Body of pancreas (tissue), 4 donors: ENCODE measurements at regions of chr10 and their contacts with region 1.

Region 1: GRCh38 chr10:71285180-71285545 is 33.9 kb upstream of the SLC29A3 start:
- DNase-seq: peak; percentile 40 to 62 (median 46)
- ATAC-seq: peak; percentile 67
- H3K4me3 ChIP-seq: no peak overlapping the region
- H3K27ac ChIP-seq: no peak overlapping the region
- H3K4me1 ChIP-seq: no peaks in the 10 kb centered on the region
- H3K27me3 ChIP-seq: no peaks in the 10 kb centered on the region
- CTCF ChIP-seq: peak; percentile 52 to 77 (median 67)
- POLR2A ChIP-seq: no peak

Region 2: DNA sequence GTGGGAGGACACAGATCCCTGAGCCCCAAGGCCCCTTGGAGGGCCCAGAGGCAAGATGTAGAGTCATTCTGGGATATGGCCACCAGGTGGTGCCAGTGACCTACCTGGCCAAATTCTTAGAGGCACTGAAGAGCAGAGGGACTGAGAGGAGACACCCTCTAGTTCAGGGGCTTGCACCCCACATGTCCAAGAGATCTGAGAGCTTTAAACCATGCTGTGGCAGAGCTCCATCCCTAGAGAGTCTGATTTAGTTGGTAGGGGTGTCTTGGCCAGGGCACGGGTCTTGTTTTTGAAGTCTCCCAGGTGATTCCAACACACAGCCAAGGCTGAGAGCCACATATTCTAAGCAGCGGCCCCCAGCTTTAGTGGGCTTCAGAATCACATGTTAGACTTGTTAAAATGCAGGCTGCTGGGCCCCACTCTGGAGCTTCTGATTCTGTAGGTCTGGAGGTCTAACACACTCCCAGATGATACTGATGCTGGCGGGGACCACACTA is 735.2 kb before region 1 on chr10:
- intact Hi-C with region 1: loop called (anchors 10 kb)
- DNase-seq: peak; percentile 62 to 74 (median 68)
- ATAC-seq: peak; percentile 61
- H3K4me3 ChIP-seq: no peak overlapping the region
- H3K27ac ChIP-seq: no peak overlapping the region
- H3K4me1 ChIP-seq: no peaks in the 10 kb centered on the region
- H3K27me3 ChIP-seq: no peaks in the 10 kb centered on the region
- CTCF ChIP-seq: peak; percentile 67 to 84 (median 80)
- POLR2A ChIP-seq: no peak

Region 3: DNA sequence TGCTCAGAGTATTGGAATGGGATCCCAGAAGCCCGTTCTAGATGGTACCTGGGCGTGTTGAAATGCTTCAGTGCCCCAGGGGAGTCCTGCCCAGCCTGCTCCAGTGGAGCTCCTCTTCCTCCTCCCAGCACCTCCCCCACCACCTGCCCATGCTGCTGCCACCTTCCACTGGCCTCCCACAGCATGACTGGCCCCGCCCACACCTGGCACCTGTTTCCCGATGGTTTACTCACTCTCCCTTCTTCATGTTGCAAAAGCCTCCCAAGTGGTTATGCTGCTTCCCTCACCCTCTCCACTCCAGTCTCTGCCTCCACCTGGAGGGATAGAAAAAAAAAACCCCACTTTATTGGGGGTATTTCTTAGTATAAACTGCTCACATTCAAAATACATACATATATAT is 364.6 kb before region 1 on chr10:
- intact Hi-C with region 1: loop called (anchors 5 kb)
- DNase-seq: peak; percentile 58 to 78 (median 69)
- ATAC-seq: peak; percentile 62
- H3K4me3 ChIP-seq: no peak overlapping the region
- H3K27ac ChIP-seq: no peak overlapping the region
- H3K4me1 ChIP-seq: no peaks in the 10 kb centered on the region
- H3K27me3 ChIP-seq: no peaks in the 10 kb centered on the region
- CTCF ChIP-seq: no peak
- POLR2A ChIP-seq: no peak

Region 4: GRCh38 chr10:71052076-71052660 is 233.0 kb before region 1 on chr10:
- intact Hi-C with region 1: no loop called
- DNase-seq: peak in 3 of 4 donors; percentile 8 to 36 (median 29)
- ATAC-seq: no peak
- H3K4me3 ChIP-seq: no peak overlapping the region
- H3K27ac ChIP-seq: no peak overlapping the region
- H3K4me1 ChIP-seq: no peaks in the 10 kb centered on the region
- H3K27me3 ChIP-seq: no peaks in the 10 kb centered on the region
- CTCF ChIP-seq: no peak
- POLR2A ChIP-seq: no peak

Region 5: DNA sequence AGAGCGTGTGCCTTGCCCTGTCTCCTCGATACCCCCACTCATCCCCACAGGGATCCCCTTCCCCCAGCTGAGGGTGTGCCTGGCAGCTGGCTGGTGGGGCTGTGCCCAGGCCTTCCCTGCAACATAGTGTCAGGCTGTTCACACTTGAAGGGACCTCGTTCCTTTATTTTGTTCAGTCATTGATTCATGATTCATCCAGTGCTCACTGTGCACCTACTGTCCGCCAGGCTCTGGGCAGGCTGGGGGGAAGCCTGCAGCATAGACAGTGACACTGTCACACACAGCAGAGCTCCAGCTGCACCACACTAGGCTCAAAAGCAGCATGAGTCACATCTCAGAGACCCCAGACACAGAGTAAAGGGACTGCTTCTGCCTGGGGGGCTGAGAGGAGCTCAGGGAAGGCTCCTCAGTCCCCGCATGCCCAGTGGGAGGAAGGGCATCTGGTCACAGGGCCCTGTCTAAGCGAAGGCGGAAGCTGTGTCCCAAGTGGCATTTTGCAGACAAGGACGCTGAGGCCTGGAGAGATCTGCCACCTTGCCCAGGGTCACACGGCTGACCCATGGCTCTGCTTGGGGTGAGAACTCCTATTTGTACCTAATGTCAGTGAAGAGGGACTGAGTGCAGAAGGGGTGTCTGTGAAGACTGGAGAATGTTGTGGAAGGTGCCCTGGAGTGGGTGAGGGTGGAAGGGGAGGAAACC is 139.5 kb after region 1 on chr10:
- intact Hi-C with region 1: no loop called
- DNase-seq: no peak
- ATAC-seq: no peak
- H3K4me3 ChIP-seq: no peak overlapping the region
- H3K27ac ChIP-seq: no peak overlapping the region
- H3K4me1 ChIP-seq: no peaks in the 10 kb centered on the region
- H3K27me3 ChIP-seq: no peaks in the 10 kb centered on the region
- CTCF ChIP-seq: no peak
- POLR2A ChIP-seq: no peak

Region 6: DNA sequence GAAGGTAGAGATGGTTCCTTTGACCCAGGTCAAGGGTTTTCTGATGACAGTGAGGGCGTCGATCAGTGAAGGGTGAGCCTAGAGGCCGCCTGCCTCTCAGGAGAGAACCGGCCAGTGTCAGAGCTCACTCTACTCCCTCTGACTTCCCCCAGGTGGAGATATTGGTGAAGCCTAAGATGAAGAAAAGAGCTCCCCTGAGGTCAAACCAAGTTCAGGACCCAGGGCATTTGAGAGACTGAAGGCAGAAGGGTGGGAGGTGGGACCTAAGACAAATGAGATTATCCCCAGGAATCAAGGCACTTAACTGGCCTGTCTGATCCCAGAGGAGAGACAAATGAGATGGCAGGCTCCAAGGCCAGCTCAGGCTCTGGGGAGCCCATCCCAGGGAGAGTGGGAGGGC is 216.2 kb after region 1 on chr10:
- intact Hi-C with region 1: no loop called
- DNase-seq: no peak
- ATAC-seq: no peak
- H3K4me3 ChIP-seq: no peak overlapping the region
- H3K27ac ChIP-seq: no peak overlapping the region
- H3K4me1 ChIP-seq: no peaks in the 10 kb centered on the region
- H3K27me3 ChIP-seq: no peaks in the 10 kb centered on the region
- CTCF ChIP-seq: no peak
- POLR2A ChIP-seq: no peak